ENCODE measurements at regions of chr21 and their contacts with region 1.

Region 1: GRCh38 chr21:46323227-46324128 is at the start of gene C21orf58:
- DNase-seq: peak; percentile 98
- ATAC-seq: peak; percentile 88
- H3K4me3 Mint-ChIP-seq: peak within 1 kb of the TSS; percentile 95
- H3K27ac Mint-ChIP-seq: peak within 1 kb of the TSS; percentile 94
- H3K4me1 Mint-ChIP-seq: peaks cover 30% of the 10 kb centered on the region
- H3K27me3 Mint-ChIP-seq: no peaks in the 10 kb centered on the region
- total RNA-seq, gene C21orf58: 27.4 to 33.0 TPM

Region 2: GRCh38 chr21:45542242-45542666 is 781.2 kb before region 1 on chr21 and contains the start of gene SLC19A1:
- CTCF ChIA-PET with region 1: no interaction called
- POLR2A ChIA-PET with region 1: no interaction called
- intact Hi-C with region 1: loop called in 1 of 2 experiments (anchors 5 kb)
- DNase-seq: peak; percentile 86
- ATAC-seq: peak; percentile 86
- H3K4me3 Mint-ChIP-seq: peak within 1 kb of the TSS; percentile 80
- H3K27ac Mint-ChIP-seq: peak within 1 kb of the TSS; percentile 80
- H3K4me1 Mint-ChIP-seq: peaks cover 20% of the 10 kb centered on the region
- H3K27me3 Mint-ChIP-seq: no peaks in the 10 kb centered on the region
- total RNA-seq, gene SLC19A1: 46.1 to 50.0 TPM

Region 3: DNA sequence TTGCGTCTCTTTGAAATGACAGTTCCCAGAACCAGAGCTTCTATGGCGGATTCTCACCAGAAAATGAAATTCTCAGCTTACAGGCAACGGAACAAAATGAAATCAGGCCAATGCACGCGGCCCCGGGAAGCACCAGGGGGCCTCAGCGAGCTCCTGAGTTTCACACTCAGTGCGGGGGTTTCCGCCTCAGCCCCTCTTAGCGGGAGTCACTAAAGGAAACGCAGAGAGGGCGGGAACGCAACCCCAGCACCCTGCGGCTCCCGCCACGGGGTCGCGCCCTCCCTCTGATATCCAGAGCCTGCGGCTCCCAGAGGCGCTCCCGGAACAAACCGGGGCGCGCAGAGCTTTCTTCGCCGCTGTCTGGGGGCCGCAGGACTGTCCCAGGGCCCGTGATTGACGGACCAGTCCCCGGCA is 349.8 kb before region 1 on chr21:
- CTCF ChIA-PET with region 1: no interaction called
- POLR2A ChIA-PET with region 1: no interaction called
- intact Hi-C with region 1: loop called in 1 of 2 experiments (anchors 2 kb)
- DNase-seq: peak; percentile 89
- ATAC-seq: peak; percentile 80
- H3K4me3 Mint-ChIP-seq: peak overlapping the region; percentile 51
- H3K27ac Mint-ChIP-seq: peak overlapping the region; percentile 60
- H3K4me1 Mint-ChIP-seq: peaks cover 16% of the 10 kb centered on the region
- H3K27me3 Mint-ChIP-seq: peaks cover 18% of the 10 kb centered on the region

Region 4: DNA sequence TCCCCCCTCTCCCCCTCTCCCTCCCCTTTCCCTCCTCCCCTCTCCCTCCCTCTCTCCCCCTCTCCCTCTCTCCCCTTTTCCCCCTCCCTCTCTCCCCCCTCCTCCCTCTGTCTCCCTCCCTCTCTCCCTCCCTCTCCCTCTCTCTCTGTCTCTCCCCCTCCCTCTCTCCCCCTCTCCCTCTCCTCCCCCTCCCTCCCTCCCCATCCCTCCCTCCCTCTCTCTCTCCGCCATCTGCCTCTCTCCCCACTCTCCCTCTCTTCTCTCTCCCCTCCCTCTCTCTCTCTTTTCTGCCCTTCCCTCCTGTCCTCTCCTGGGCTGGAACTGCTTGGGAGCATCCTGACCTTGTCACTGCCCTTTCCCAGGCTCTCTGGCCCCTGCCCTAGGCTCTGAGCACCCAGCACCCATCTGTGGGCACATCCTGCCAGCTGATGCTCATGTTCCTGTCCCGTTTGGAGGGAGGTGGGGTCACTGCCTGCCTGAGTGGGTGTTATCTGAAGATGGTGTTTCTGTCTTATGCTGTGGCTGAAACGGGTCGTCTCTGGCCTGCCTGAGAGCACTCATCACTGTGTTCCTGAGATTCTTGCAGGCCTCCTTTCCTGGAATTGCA is 178.9 kb before region 1 on chr21:
- CTCF ChIA-PET with region 1: interaction called, 5 read pairs
- POLR2A ChIA-PET with region 1: no interaction called
- intact Hi-C with region 1: loop called in 1 of 2 experiments (anchors 1 kb)
- DNase-seq: peak; percentile 40
- ATAC-seq: no peak
- H3K4me3 Mint-ChIP-seq: no peak overlapping the region
- H3K27ac Mint-ChIP-seq: peak overlapping the region; percentile 34
- H3K4me1 Mint-ChIP-seq: peaks cover 12% of the 10 kb centered on the region
- H3K27me3 Mint-ChIP-seq: no peaks in the 10 kb centered on the region

Region 5: GRCh38 chr21:46228345-46229051 is 95.0 kb before region 1 on chr21 and contains the start of gene LSS:
- CTCF ChIA-PET with region 1: interaction called, 4 read pairs
- POLR2A ChIA-PET with region 1: interaction called, 3 read pairs
- intact Hi-C with region 1: loop called (anchors 1 to 10 kb)
- DNase-seq: peak; percentile 98
- ATAC-seq: peak; percentile 95
- H3K4me3 Mint-ChIP-seq: peak within 1 kb of the TSS; percentile 77
- H3K27ac Mint-ChIP-seq: peak within 1 kb of the TSS; percentile 91
- H3K4me1 Mint-ChIP-seq: peaks cover 41% of the 10 kb centered on the region
- H3K27me3 Mint-ChIP-seq: no peaks in the 10 kb centered on the region
- total RNA-seq, gene LSS: 14.1 to 21.3 TPM

Region 6: GRCh38 chr21:46285761-46286496 is 37.5 kb before region 1 on chr21 and contains the start of gene YBEY:
- CTCF ChIA-PET with region 1: no interaction called
- POLR2A ChIA-PET with region 1: interaction called, 7 read pairs
- intact Hi-C with region 1: loop called (anchors 1 to 2 kb)
- DNase-seq: peak; percentile 94
- ATAC-seq: peak; percentile 94
- H3K4me3 Mint-ChIP-seq: peak within 1 kb of the TSS; percentile 88
- H3K27ac Mint-ChIP-seq: peak within 1 kb of the TSS; percentile 98
- H3K4me1 Mint-ChIP-seq: peaks cover 52% of the 10 kb centered on the region
- H3K27me3 Mint-ChIP-seq: no peaks in the 10 kb centered on the region
- total RNA-seq, gene YBEY: 16.9 to 20.6 TPM

Region 7: DNA sequence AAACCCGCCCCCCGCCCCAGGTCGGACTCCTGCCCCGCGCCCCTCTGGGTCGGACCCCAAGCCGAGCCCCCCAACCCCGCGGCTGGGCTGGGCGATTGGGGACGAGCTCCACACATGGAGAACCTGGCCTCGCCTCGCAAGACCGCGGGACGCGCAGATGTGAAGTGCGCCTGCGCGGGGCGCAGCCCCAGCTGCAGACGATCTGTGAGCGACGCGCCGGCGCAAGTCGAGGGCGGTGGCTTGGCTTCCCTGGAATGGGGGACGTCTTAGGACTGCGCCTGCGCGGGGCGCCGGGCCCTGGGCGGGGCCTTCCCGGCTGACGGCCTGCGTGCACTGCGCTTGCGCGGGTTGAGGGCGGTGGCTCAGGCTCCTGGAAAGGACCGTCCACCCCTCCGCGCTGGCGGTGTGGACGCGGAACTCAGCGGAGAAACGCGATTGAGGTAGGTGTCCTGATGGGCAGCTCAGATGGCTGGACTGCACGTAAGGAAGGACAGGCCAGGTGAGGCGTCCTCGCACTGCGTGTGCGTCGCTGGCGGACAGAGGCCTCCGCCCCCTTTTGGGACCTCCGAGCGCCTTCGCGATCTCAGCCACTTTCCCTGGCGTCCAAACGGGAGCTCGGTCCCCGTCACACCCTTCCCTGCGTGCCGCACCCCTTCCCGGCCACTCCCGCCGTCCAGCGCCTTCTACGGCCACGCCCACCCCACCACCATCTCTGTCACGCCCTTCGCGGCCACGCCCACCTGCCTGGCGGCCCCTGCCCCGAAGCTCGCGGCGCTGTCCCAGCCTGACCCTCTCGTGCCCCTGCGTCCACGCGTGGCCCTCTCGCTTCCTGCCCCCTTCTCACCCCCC is 312.1 kb after region 1 on chr21 and contains the start of gene PRMT2:
- CTCF ChIA-PET with region 1: interaction called, 4 read pairs
- POLR2A ChIA-PET with region 1: no interaction called
- intact Hi-C with region 1: loop called in 1 of 2 experiments (anchors 1 kb)
- DNase-seq: peak; percentile 99
- ATAC-seq: peak; percentile 82
- H3K4me3 Mint-ChIP-seq: peak within 1 kb of the TSS; percentile 95
- H3K27ac Mint-ChIP-seq: peak within 1 kb of the TSS; percentile 90
- H3K4me1 Mint-ChIP-seq: peaks cover 68% of the 10 kb centered on the region
- H3K27me3 Mint-ChIP-seq: no peaks in the 10 kb centered on the region
- total RNA-seq, gene PRMT2: 60.9 to 74.1 TPM

Measured in activated CD4-positive, alpha-beta T cell treated with anti-CD3 and anti-CD28 coated beads for 36 hours (primary cell).